CD8-positive, alpha-beta memory T cell (primary cell): ENCODE measurements at regions of chr4 and their contacts with region 1.

Region 1: DNA sequence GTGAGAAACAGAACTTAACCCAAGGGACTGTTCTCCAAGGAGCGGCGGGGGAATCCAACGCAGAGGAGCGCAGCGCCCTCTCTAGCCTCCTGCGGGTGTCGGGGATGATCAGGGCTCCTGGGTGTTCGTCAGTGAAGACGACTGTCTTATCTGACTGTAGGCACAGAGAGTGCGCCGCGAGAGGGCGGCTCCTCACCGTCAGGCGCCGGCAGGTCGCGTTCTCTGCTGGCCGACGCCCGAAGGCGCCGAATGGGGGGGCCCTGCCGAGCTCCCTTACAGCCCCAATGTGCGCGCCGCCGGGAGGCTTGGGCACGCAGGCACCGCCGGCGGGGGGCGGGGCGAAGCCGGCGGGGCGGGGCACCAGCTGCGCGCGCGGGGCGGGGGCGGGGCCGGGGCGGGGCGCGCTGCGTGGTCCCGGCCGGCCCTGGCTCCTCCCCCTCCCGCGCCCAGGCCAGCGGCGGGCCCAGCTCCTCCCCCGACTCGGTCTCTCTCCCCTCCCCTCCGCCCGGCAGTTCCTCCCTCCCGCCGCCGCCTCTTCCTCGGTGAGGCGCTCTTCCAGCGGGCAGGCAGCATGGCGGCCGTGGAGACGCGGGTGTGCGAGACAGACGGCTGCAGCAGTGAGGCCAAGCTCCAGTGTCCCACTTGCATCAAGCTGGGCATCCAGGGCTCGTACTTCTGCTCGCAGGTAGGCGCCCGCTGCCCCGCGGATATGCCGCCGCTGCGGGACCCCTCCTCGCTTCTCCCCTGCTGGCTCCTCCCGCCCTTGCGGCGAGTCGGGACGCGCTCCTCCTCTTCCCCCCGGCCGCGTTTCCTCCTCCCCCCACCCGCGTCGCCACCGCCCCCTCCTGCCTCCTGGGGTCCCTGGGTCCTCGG is at the start of gene METAP1:
- DNase-seq: peak; percentile 95 to 98 (median 97)
- H3K4me3 ChIP-seq: peak within 1 kb of the TSS; percentile 78
- H3K4me3 Mint-ChIP-seq: peak within 1 kb of the TSS; percentile 81 to 95 (median 91)
- H3K27ac ChIP-seq: peak within 1 kb of the TSS; percentile 87
- H3K27ac Mint-ChIP-seq: peak within 1 kb of the TSS; percentile 90 to 100 (median 98)
- H3K4me1 ChIP-seq: peaks cover 24% of the 10 kb centered on the region
- H3K4me1 Mint-ChIP-seq: peaks cover 35 to 46% (median 45%) of the 10 kb centered on the region in 3 donors
- H3K27me3 ChIP-seq: no peaks in the 10 kb centered on the region
- H3K27me3 Mint-ChIP-seq: peaks cover 1 to 3% of the 10 kb centered on the region in 2 donors
- total RNA-seq, gene METAP1: 56.6 to 58.5 TPM

Region 2: DNA sequence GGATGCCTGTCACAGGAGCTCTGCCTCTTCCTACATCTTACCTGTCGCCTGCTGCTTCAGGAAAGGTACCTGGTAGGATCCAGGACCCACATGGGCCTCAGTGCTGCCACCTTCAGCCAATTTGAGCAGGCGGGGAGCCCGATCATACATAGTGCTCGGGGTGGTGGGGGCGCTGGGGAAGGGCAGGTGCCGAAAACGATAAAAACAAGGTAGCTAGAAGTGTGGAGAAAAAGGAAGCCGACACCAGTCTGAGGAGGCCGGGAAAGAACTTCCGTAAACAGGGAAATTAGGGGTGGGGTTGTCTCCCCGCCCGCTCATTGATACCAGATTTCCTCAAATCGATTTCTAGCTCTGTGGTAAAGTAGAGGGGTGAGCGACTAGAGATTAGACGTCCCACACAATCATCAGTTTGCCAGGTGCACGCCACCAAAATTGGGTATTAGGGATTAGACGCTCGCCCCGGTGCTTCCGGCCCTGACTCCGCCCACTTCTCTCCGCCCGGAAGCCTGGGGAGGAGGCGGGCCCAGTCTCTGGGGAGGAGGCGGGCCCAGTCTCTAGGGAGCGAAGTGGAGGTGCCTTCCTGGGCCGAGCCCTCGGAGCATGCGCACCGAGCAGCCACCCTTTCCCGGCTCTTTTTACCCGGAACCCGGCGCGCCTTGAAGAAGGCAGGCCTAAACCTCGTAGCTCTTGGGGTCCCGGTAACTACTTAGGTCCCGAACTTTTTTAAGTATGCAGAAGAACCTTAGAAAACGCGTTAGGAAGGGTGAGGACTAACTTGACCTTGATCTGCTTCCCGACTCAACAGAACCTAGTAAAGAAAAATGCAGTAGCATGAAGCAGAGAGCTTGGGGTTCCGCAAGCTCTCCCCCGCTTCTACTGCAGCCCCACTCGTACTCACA is 852.2 kb before region 1 on chr4 and contains the start of gene STPG2:
- CTCF ChIA-PET with region 1: interaction called, 9 read pairs
- POLR2A ChIA-PET with region 1: interaction called, 10 read pairs
- DNase-seq: peak; percentile 89 to 94 (median 91)
- H3K4me3 ChIP-seq: peak within 1 kb of the TSS; percentile 85
- H3K4me3 Mint-ChIP-seq: peak within 1 kb of the TSS; percentile 92 to 98 (median 95)
- H3K27ac ChIP-seq: peak within 1 kb of the TSS; percentile 78
- H3K27ac Mint-ChIP-seq: peak within 1 kb of the TSS; percentile 93 to 99 (median 98)
- H3K4me1 ChIP-seq: peaks cover 17% of the 10 kb centered on the region
- H3K4me1 Mint-ChIP-seq: peaks cover 18 to 35% (median 33%) of the 10 kb centered on the region in 3 donors
- H3K27me3 ChIP-seq: no peaks in the 10 kb centered on the region
- H3K27me3 Mint-ChIP-seq: no peaks in the 10 kb centered on the region
- total RNA-seq, gene STPG2: not detected

Region 3: GRCh38 chr4:98851806-98852205 is 143.6 kb before region 1 on chr4:
- CTCF ChIA-PET with region 1: no interaction called
- POLR2A ChIA-PET with region 1: no interaction called
- DNase-seq: no peak
- H3K4me3 ChIP-seq: no peak overlapping the region
- H3K4me3 Mint-ChIP-seq: no peak overlapping the region
- H3K27ac ChIP-seq: no peak overlapping the region
- H3K27ac Mint-ChIP-seq: no peak overlapping the region
- H3K4me1 ChIP-seq: no peaks in the 10 kb centered on the region
- H3K4me1 Mint-ChIP-seq: peaks cover 0 to 3% (median 0%) of the 10 kb centered on the region in 3 donors
- H3K27me3 ChIP-seq: no peaks in the 10 kb centered on the region
- H3K27me3 Mint-ChIP-seq: peaks cover 5 to 42% of the 10 kb centered on the region in 2 donors

Region 4: DNA sequence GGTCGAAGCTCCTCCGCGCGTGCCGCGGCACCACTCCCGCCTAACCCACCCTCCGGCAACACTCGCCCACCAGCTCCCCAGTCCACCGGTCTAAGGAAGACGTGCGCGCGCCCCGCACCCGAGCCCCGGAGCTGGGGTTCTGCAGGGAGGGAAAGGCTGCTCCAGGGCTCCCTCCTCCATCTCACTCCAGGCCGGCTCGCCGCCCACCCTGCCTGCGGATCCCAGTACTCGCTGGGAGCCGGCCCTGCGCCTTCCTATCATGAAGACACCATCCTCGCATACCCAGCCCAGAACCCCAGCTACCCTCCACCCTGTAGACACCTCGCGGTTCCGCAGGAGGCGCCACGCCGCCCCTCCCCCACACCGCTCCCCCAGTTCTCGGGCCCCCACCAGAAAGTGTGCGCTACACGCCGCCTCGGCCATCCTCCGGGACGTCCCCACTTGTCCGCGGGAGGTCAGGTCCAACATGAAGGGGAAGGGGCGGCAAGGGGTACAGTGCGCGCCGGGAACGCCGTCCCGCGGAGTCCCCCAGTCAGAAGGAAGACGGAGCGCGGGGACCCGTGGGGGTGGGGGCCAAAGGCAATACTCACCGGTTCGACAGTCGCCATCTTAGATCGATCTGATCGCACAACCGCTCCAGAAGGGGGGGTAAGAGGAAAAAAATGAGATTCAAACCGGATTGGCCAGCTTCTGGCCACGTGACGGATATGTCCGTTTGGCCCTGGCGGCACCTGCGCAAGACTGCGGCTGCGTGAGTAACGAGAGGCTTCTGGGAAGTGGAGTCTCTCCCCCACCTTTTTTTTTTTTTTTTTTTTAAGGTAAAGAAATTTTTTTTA is 66.7 kb before region 1 on chr4 and contains the start of gene EIF4E:
- CTCF ChIA-PET with region 1: interaction called, 47 read pairs
- POLR2A ChIA-PET with region 1: interaction called, 36 read pairs
- DNase-seq: peak; percentile 95 to 99 (median 98)
- H3K4me3 ChIP-seq: peak within 1 kb of the TSS; percentile 89
- H3K4me3 Mint-ChIP-seq: peak within 1 kb of the TSS; percentile 96 to 99 (median 98)
- H3K27ac ChIP-seq: peak within 1 kb of the TSS; percentile 87
- H3K27ac Mint-ChIP-seq: peak within 1 kb of the TSS; percentile 94 to 98 (median 97)
- H3K4me1 ChIP-seq: peaks cover 17% of the 10 kb centered on the region
- H3K4me1 Mint-ChIP-seq: peaks cover 37 to 54% (median 40%) of the 10 kb centered on the region in 3 donors
- H3K27me3 ChIP-seq: no peaks in the 10 kb centered on the region
- H3K27me3 Mint-ChIP-seq: peaks cover 0 to 5% of the 10 kb centered on the region in 2 donors
- total RNA-seq, gene EIF4E: 157 to 168 TPM

Region 5: DNA sequence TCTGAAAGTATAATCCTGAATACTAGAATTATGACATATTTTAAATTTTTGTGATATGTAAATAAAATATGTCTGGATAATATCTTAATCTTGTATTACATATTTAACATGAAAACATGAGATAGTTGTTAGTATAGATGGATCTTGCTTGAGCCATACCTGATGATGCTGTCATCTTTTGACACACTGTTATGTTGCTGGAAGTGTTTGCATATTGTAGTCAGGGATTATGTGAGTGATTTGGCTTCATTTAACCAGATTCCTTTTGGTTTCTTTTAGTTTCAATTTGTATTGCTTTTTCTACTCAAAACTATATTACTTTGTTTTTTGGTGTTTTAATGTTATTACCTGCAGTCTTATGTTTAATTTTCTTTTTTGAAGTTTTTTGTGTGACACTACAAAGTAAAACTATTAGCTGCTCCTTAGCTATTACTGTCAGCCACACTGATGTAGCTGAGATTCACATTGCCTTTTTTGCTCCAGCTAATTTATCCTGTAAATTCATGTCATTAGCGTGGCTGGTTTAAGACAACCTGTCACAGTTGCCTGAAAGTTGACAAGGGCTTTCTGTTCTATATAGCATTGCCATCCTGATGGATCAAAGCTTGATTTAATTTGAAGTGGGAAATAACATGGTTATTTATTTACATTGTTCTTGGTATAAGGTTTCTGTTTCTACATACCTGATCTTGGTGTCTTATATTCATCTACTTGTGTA is 33.8 kb after region 1 on chr4:
- CTCF ChIA-PET with region 1: interaction called, 15 read pairs
- POLR2A ChIA-PET with region 1: no interaction called
- DNase-seq: no peak
- H3K4me3 ChIP-seq: no peak overlapping the region
- H3K4me3 Mint-ChIP-seq: peak overlapping the region in 1 of 7 donors; percentile 38
- H3K27ac ChIP-seq: no peak overlapping the region
- H3K27ac Mint-ChIP-seq: peak overlapping the region in 6 of 8 donors; percentile 10 to 82 (median 36)
- H3K4me1 ChIP-seq: peaks cover 7% of the 10 kb centered on the region
- H3K4me1 Mint-ChIP-seq: peaks cover 60 to 79% (median 74%) of the 10 kb centered on the region in 3 donors
- H3K27me3 ChIP-seq: no peaks in the 10 kb centered on the region
- H3K27me3 Mint-ChIP-seq: no peaks in the 10 kb centered on the region

Region 6: DNA sequence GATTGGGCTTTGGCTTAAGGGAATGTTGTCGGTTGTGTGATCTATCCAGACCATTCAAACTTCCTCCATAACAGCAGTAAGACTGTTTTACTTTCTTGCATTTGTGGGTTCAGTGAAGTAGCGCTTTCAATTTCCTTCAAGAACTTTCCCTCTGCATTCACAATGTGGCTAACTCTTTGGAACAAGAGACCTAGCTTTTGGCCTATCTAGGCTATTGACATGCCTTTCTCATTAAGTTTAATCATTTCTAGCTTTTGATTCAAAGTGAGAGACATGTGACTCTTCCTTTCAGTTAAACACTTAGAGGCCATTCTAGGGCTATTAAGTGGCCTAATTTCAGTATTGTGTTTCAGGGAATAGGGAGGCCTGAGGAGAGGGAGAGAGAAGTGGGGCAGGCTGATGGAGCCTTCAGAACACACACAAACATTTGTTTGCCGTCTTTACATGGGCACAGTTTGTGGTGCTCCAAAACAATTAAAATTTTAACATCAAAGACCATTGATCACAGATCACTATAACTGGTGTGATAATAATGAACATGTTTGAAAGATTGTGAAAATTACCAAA is 59.1 kb after region 1 on chr4:
- CTCF ChIA-PET with region 1: interaction called, 189 read pairs
- POLR2A ChIA-PET with region 1: interaction called, 13 read pairs
- DNase-seq: no peak
- H3K4me3 ChIP-seq: no peak overlapping the region
- H3K4me3 Mint-ChIP-seq: no peak overlapping the region
- H3K27ac ChIP-seq: no peak overlapping the region
- H3K27ac Mint-ChIP-seq: peak overlapping the region; percentile 9 to 59 (median 20)
- H3K4me1 ChIP-seq: peaks cover 6% of the 10 kb centered on the region
- H3K4me1 Mint-ChIP-seq: peaks cover 15 to 32% (median 29%) of the 10 kb centered on the region in 3 donors
- H3K27me3 ChIP-seq: no peaks in the 10 kb centered on the region
- H3K27me3 Mint-ChIP-seq: no peaks in the 10 kb centered on the region

Region 7: GRCh38 chr4:99088481-99089365 is 93.3 kb after region 1 on chr4 and contains the start of gene ADH5:
- CTCF ChIA-PET with region 1: interaction called, 21 read pairs
- POLR2A ChIA-PET with region 1: interaction called, 35 read pairs
- DNase-seq: peak; percentile 83 to 94 (median 85)
- H3K4me3 ChIP-seq: peak within 1 kb of the TSS; percentile 97
- H3K4me3 Mint-ChIP-seq: peak within 1 kb of the TSS; percentile 96 to 99 (median 97)
- H3K27ac ChIP-seq: peak within 1 kb of the TSS; percentile 85
- H3K27ac Mint-ChIP-seq: peak within 1 kb of the TSS; percentile 94 to 99 (median 97)
- H3K4me1 ChIP-seq: peaks cover 15% of the 10 kb centered on the region
- H3K4me1 Mint-ChIP-seq: peaks cover 49 to 64% (median 58%) of the 10 kb centered on the region in 3 donors
- H3K27me3 ChIP-seq: no peaks in the 10 kb centered on the region
- H3K27me3 Mint-ChIP-seq: no peaks in the 10 kb centered on the region
- total RNA-seq, gene ADH5: 113 to 116 TPM